ENCODE measurements at regions of chr5 and their contacts with region 1.

Region 1: DNA sequence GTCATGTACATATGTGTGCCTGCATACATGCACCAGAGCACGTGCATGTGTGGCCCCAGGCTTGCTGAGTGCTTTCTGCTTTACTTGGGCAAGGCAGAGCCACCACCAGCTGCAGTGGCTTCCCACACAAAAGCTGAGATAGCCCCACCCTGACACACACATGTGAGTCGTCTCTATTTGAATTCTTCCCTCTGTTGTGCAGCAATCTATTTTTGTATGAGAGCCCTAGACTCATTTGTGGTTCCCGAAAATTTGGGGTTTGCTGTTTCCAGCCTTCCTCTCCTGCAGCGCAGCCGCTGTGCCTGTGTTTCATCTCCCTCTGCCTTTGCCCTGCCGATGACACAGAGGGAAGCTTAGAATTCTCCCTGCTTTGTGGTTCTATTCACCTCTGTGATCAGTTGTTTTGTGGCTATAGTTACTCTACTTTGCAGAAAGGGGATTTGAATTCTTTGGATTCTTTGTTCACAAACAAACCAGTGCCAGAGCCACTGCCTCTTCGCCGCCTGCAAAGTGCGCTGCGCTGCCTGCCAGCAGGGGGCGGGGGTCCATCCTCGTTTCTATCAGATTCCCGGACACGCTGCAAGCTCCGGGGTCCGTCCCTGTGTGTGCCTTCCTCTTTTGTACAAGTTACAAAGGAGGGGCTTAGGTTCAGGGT is 95.8 kb upstream of the DAP start:
- DNase-seq: peak; percentile 66
- H3K4me3 ChIP-seq: peak overlapping the region; percentile 25; the same call in 1 of the 2 replicates
- H3K27ac ChIP-seq: peak overlapping the region; percentile 65
- H3K27me3 ChIP-seq: peaks cover 2% of the 10 kb centered on the region
- CTCF ChIP-seq: peak; percentile 99

Region 2: GRCh38 chr5:10701567-10702039 is 155.2 kb before region 1 on chr5:
- CTCF ChIA-PET with region 1: interaction called, 10 read pairs
- POLR2A ChIA-PET with region 1: no interaction called
- DNase-seq: no peak
- H3K4me3 ChIP-seq: no peak overlapping the region
- H3K27ac ChIP-seq: peak overlapping the region; percentile 98
- H3K27me3 ChIP-seq: no peaks in the 10 kb centered on the region
- CTCF ChIP-seq: peak; percentile 55

Region 3: GRCh38 chr5:10825897-10826644 is 30.7 kb before region 1 on chr5:
- CTCF ChIA-PET with region 1: interaction called, 14 read pairs
- POLR2A ChIA-PET with region 1: no interaction called
- DNase-seq: no peak
- H3K4me3 ChIP-seq: no peak overlapping the region
- H3K27ac ChIP-seq: no peak overlapping the region
- H3K27me3 ChIP-seq: no peaks in the 10 kb centered on the region
- CTCF ChIP-seq: no peak

Region 4: GRCh38 chr5:10838038-10838437 is 18.8 kb before region 1 on chr5:
- CTCF ChIA-PET with region 1: interaction called, 14 read pairs
- POLR2A ChIA-PET with region 1: no interaction called
- DNase-seq: no peak
- H3K4me3 ChIP-seq: no peak overlapping the region
- H3K27ac ChIP-seq: no peak overlapping the region
- H3K27me3 ChIP-seq: no peaks in the 10 kb centered on the region
- CTCF ChIP-seq: no peak

Region 5: GRCh38 chr5:10876006-10876744 is 19.4 kb after region 1 on chr5:
- CTCF ChIA-PET with region 1: interaction called, 17 read pairs
- POLR2A ChIA-PET with region 1: no interaction called
- DNase-seq: no peak
- H3K4me3 ChIP-seq: no peak overlapping the region
- H3K27ac ChIP-seq: no peak overlapping the region
- H3K27me3 ChIP-seq: no peaks in the 10 kb centered on the region
- CTCF ChIP-seq: no peak

Measured in AG04450 (cell line).